ENCODE measurements at regions of chr17 and their contacts with region 1.

Region 1: GRCh38 chr17:72725433-72726068 is 366.9 kb downstream of the SLC39A11 start:
- DNase-seq: peak in 3 of 5 donors; percentile 39 to 52 (median 40)
- ATAC-seq: peak; percentile 51 to 82 (median 76)
- H3K4me3 ChIP-seq: no peak overlapping the region
- H3K27ac ChIP-seq: no peak overlapping the region
- H3K4me1 ChIP-seq: peaks cover 0 to 16% (median 0%) of the 10 kb centered on the region in 12 donors
- H3K27me3 ChIP-seq: no peaks in the 10 kb centered on the region
- CTCF ChIP-seq: peak; percentile 61 to 91 (median 81)
- POLR2A ChIP-seq: no peak

Region 2: GRCh38 chr17:72556944-72557826 is 168.4 kb before region 1 on chr17:
- intact Hi-C with region 1: loop called in 8 of 10 experiments (anchors 2 to 10 kb)
- DNase-seq: peak in 4 of 5 donors; percentile 27 to 57 (median 40)
- ATAC-seq: peak in 3 of 4 donors; percentile 46 to 74 (median 63)
- H3K4me3 ChIP-seq: no peak overlapping the region
- H3K27ac ChIP-seq: no peak overlapping the region
- H3K4me1 ChIP-seq: no peaks in the 10 kb centered on the region
- H3K27me3 ChIP-seq: peaks cover 0 to 16% (median 0%) of the 10 kb centered on the region in 9 donors
- CTCF ChIP-seq: peak; percentile 49 to 85 (median 74)
- POLR2A ChIP-seq: no peak

Region 3: DNA sequence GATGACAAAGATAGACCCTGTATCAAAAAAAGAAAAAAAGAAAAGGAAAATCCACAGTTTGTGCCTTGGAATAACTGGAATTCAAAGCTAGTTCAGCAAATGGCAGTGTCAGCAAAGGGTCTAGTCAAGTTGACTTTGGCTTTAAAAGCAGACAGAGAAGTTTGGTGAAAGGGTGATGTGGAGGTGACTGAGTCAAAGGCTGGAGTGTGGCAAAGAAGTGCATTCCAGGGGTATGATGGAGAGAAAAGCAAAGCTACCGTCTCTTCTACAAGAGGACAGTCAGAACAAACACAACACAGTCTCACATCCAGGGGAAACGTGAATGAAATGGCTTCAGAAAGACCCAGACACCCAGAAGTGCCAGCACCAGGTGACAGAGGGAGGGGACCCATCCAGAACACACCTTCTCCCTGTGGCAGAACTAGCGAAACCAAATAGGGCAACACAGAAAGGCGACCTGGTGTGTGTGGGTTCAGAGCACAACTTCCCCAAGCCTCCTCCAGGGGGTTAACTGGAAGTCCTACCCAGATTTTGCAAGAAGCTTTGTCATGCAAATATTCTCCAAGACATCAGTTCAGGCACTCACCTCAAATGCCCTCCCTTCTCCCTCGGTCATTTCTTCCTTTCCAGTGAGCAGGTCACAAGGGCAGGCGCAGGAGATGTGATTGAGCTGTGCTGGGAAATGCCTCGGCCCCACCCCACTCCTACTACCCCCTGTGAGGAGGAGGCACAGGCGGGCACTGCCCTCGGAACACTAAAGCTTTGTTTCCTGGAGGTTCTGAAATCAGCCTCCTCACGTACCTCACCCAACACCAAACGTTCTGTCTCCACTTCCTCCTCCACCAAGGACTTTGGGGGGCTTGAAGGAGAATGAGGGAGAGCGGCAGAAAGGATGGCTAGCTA is 122.8 kb before region 1 on chr17:
- intact Hi-C with region 1: no loop called
- DNase-seq: no peak
- ATAC-seq: no peak
- H3K4me3 ChIP-seq: no peak overlapping the region
- H3K27ac ChIP-seq: no peak overlapping the region
- H3K4me1 ChIP-seq: peaks cover 0 to 9% (median 0%) of the 10 kb centered on the region in 12 donors
- H3K27me3 ChIP-seq: peaks cover 0 to 25% (median 4%) of the 10 kb centered on the region in 9 donors
- CTCF ChIP-seq: no peak
- POLR2A ChIP-seq: no peak

Region 4: GRCh38 chr17:72667096-72668063 is 58.2 kb before region 1 on chr17:
- intact Hi-C with region 1: no loop called
- DNase-seq: no peak
- ATAC-seq: no peak
- H3K4me3 ChIP-seq: no peak overlapping the region
- H3K27ac ChIP-seq: no peak overlapping the region
- H3K4me1 ChIP-seq: no peaks in the 10 kb centered on the region
- H3K27me3 ChIP-seq: no peaks in the 10 kb centered on the region
- CTCF ChIP-seq: no peak
- POLR2A ChIP-seq: no peak

Region 5: GRCh38 chr17:72826602-72827001 is 101.1 kb after region 1 on chr17:
- intact Hi-C with region 1: no loop called
- DNase-seq: no peak
- ATAC-seq: no peak
- H3K4me3 ChIP-seq: no peak overlapping the region
- H3K27ac ChIP-seq: no peak overlapping the region
- H3K4me1 ChIP-seq: no peaks in the 10 kb centered on the region
- H3K27me3 ChIP-seq: no peaks in the 10 kb centered on the region
- CTCF ChIP-seq: peak in 2 of 12 donors; percentile 18 to 26
- POLR2A ChIP-seq: no peak

Region 6: DNA sequence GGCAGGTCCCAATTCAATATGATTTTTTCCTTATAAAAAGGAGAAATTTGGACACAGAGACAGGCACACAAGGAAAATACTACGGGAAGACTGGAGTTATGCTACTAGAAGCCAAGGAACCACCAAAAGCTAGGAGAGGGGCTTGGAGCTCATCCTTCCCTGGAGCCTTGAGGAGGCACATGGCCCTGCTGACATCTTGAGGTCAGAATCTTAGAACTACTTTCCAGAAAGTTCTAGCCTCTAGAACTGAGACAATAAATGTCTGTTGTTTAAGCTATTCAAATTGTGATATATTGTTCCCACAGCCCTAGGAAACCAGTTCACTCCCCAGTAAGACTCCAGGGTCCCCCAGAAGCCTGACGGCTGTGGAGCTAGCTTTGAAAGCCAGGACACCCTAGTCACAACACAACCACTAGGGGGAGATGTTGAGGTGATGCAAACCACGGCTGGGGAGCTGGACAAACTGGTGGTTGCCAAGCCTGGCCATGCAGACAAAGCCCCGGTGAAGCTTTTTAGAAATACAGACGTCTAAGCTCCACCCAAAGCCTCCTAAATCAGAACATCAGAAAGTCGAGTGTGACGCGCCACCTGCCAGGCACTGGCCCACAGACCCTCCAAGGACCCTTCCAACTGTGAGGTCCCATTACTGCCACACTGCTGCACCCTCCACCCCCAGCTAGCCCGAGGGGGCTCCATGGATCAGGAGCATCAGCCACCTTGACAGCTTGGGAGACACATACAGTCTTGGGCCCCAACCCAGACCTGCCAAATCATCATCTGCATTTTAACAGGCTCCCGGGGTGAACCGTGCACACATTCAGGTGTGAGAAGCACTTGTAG is 260.6 kb after region 1 on chr17:
- intact Hi-C with region 1: loop called in 2 of 10 experiments (anchors 5 to 10 kb)
- DNase-seq: peak in 4 of 5 donors; percentile 48 to 63 (median 60)
- ATAC-seq: peak; percentile 42 to 85 (median 78)
- H3K4me3 ChIP-seq: no peak overlapping the region
- H3K27ac ChIP-seq: no peak overlapping the region
- H3K4me1 ChIP-seq: peaks cover 0 to 6% (median 0%) of the 10 kb centered on the region in 12 donors
- H3K27me3 ChIP-seq: no peaks in the 10 kb centered on the region
- CTCF ChIP-seq: peak; percentile 68 to 87 (median 81)
- POLR2A ChIP-seq: no peak

Region 7: DNA sequence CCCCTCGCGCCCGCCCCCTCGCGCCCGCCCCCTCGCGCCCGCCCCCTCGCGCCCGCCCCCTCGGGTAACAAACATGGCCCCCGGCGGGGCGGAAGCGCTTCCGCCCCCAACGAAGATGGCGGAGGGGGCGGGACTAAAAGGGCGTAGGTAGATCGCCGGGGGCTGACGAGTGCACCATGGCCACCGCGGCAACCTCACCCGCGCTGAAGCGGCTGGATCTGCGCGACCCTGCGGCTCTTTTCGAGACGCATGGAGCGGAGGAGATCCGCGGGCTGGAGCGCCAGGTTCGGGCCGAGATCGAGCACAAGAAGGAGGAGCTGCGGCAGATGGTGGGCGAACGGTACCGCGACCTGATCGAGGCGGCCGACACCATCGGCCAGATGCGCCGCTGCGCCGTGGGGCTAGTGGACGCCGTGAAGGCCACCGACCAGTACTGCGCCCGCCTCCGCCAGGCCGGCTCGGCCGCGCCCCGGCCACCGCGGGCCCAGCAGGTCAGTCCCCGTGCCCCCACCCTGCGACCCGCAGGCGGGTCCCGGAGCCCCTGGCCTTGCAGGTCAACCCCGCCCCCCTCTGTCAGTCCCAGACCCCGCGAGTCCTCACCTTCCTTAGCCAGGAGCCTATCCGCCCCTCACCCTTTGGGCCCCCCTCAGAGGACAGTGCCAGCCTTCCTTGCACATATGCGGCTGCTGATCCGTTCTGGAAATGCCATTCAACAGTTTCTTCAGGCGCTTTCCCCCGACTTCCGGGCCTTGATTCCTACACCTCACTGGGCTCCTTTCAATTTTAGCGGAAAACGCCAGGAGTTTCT is 467.5 kb after region 1 on chr17 and contains the start of gene COG1:
- intact Hi-C with region 1: loop called in 9 of 10 experiments (anchors 2 to 5 kb)
- DNase-seq: peak; percentile 79 to 95 (median 87)
- ATAC-seq: peak; percentile 74 to 92 (median 90)
- H3K4me3 ChIP-seq: peak within 1 kb of the TSS; percentile 62 to 100 (median 96)
- H3K27ac ChIP-seq: peak within 1 kb of the TSS; percentile 67 to 94 (median 88)
- H3K4me1 ChIP-seq: peaks cover 0 to 28% (median 16%) of the 10 kb centered on the region in 12 donors
- H3K27me3 ChIP-seq: no peaks in the 10 kb centered on the region
- CTCF ChIP-seq: peak in 1 of 12 donors; percentile 4
- POLR2A ChIP-seq: peak in 1 of 2 donors; percentile 40
- total RNA-seq, gene COG1: 38.4 to 65.6 (median 55.1) TPM

Region 8: DNA sequence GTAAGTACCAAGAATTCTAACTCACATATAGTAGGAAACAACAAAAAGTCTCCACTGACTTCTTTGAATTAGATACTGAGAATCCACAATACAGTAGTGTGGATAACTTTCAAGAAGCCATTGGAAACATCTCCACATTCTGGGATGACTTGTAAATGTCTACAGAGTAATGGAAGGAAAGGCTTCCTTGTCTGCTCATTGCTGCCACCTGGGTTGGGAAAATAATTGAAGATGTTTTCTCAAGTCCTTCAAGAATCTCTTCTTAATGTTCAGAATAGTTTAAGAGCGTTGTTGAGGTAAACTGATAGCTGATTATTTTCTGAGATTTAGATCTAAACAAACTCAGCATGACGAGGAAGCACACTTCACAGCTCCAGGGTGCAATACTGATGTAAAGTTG is 522.2 kb after region 1 on chr17:
- intact Hi-C with region 1: loop called in 5 of 10 experiments (anchors 5 to 10 kb)
- DNase-seq: no peak
- ATAC-seq: no peak
- H3K4me3 ChIP-seq: no peak overlapping the region
- H3K27ac ChIP-seq: no peak overlapping the region
- H3K4me1 ChIP-seq: no peaks in the 10 kb centered on the region
- H3K27me3 ChIP-seq: no peaks in the 10 kb centered on the region
- CTCF ChIP-seq: peak in 5 of 12 donors; percentile 11 to 29 (median 20)
- POLR2A ChIP-seq: no peak

Region 9: GRCh38 chr17:73365906-73366623 is 640.5 kb after region 1 on chr17:
- intact Hi-C with region 1: loop called in 5 of 10 experiments (anchors 5 to 10 kb)
- DNase-seq: peak; percentile 65 to 75 (median 73)
- ATAC-seq: peak; percentile 53 to 87 (median 69)
- H3K4me3 ChIP-seq: peak overlapping the region in 7 of 12 donors; percentile 4 to 26 (median 19)
- H3K27ac ChIP-seq: peak overlapping the region; percentile 50 to 82 (median 73)
- H3K4me1 ChIP-seq: peaks cover 0 to 35% (median 19%) of the 10 kb centered on the region in 12 donors
- H3K27me3 ChIP-seq: no peaks in the 10 kb centered on the region
- CTCF ChIP-seq: no peak
- POLR2A ChIP-seq: peak in 1 of 2 donors; percentile 47

Measured in heart left ventricle (tissue), 16 donors.